ENCODE measurements at regions of chr11 and their contacts with region 1.

Region 1: DNA sequence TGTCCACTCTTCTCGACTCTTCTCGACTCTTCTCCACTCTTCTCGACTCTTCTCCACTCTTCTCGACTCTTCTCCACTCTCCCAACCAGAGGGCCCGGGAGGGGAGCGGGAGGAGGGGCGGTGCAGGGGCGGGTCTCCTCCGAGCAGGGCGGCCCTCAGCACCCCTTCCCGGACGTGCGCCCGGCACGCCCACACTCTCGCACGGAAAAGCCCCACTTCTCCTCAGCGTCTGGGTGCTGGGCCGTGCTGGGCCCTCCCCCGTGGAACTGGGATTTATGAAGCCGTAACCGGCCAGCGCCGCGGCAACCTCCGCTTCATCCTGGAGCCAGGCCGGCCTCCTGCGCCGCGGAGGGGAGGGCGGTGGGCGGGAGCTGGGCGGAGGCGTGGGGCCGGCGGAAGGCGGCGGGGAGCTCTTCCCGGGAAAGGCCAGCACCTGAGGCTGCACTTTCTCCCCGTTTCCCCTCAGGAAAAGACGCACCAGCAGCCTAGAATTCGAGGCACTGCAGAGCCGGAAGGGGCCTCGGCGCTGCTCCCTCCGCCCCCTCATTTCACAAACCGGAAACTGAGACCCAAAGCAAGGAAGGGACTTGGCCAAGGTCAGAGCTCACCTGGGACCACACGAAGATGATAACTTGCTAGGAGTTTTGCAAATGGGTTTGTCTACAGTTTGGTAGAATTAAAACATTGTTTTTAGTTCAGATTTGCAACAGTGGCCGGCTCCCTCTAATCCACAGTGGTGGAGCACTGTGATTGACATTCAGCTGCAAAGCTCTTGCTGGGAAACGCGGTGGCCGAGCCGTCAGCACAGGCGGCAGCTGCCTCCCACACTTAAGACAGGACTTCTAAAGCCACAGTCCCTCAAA is 31.6 kb upstream of the JAM3 start:
- DNase-seq: peak; percentile 27
- ATAC-seq: peak; percentile 74
- H3K4me3 Mint-ChIP-seq: peak overlapping the region; percentile 94
- H3K27ac Mint-ChIP-seq: peak overlapping the region; percentile 82
- H3K4me1 Mint-ChIP-seq: peaks cover 18% of the 10 kb centered on the region
- H3K27me3 Mint-ChIP-seq: peaks cover 10% of the 10 kb centered on the region
- CTCF ChIP-seq: no peak

Region 2: DNA sequence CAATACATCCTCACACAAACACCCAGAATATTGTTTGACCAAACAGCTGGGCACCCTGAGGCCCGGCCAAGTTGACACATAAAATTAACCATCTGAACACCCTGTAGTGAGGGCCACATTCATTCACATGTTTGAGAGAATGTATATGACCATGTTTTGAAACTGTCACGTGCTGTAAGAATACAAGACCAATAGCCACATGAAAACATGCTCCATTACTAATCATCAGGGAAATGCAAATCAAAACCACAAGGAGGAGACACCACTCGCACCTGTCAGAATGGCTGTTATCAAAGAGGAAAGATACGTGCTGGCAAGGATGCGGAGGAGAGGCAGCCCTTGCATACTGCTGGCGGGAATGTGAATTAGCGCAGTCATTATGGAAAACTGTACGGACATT is 42.2 kb before region 1 on chr11:
- CTCF ChIA-PET with region 1: no interaction called
- POLR2A ChIA-PET with region 1: no interaction called
- intact Hi-C with region 1: no loop called
- DNase-seq: no peak
- ATAC-seq: no peak
- H3K4me3 Mint-ChIP-seq: no peak overlapping the region
- H3K27ac Mint-ChIP-seq: no peak overlapping the region
- H3K4me1 Mint-ChIP-seq: peaks cover 6% of the 10 kb centered on the region
- H3K27me3 Mint-ChIP-seq: peaks cover 13% of the 10 kb centered on the region
- CTCF ChIP-seq: no peak

Region 3: DNA sequence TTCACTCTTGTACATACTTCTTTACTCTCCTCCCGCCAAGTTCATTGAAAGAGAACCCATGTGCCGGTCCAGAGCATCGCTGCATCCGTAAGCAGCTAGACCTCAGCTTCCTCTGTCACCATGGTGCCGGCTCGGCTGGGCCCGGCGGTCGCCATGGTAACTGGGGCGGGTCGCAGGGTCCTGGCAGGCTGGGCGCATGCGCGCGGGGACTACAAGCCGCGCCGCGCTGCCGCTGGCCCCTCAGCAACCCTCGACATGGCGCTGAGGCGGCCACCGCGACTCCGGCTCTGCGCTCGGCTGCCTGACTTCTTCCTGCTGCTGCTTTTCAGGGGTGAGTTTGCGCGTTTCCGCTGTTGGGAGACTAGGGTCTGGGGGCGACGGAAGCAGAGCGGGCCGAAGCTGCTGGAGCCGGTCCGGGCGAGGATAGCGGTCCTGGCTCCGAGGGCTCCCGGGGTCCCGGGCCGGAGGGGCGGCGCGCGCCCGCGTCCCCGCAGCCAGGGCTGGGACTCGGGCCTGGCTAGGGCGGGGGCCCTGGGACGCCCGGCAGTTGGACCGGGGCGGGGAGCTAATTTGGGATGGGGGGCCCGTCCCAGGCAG is 31.6 kb after region 1 on chr11 and contains the start of gene JAM3:
- CTCF ChIA-PET with region 1: no interaction called
- POLR2A ChIA-PET with region 1: interaction called, 14 read pairs
- intact Hi-C with region 1: loop called (anchors 1 kb)
- DNase-seq: peak; percentile 99
- ATAC-seq: peak; percentile 88
- H3K4me3 Mint-ChIP-seq: peak within 1 kb of the TSS; percentile 95
- H3K27ac Mint-ChIP-seq: peak within 1 kb of the TSS; percentile 90
- H3K4me1 Mint-ChIP-seq: peaks cover 42% of the 10 kb centered on the region
- H3K27me3 Mint-ChIP-seq: peaks cover 11% of the 10 kb centered on the region
- CTCF ChIP-seq: no peak
- total RNA-seq, gene JAM3: 16.2 and 17.6 TPM in 2 replicates

Region 4: DNA sequence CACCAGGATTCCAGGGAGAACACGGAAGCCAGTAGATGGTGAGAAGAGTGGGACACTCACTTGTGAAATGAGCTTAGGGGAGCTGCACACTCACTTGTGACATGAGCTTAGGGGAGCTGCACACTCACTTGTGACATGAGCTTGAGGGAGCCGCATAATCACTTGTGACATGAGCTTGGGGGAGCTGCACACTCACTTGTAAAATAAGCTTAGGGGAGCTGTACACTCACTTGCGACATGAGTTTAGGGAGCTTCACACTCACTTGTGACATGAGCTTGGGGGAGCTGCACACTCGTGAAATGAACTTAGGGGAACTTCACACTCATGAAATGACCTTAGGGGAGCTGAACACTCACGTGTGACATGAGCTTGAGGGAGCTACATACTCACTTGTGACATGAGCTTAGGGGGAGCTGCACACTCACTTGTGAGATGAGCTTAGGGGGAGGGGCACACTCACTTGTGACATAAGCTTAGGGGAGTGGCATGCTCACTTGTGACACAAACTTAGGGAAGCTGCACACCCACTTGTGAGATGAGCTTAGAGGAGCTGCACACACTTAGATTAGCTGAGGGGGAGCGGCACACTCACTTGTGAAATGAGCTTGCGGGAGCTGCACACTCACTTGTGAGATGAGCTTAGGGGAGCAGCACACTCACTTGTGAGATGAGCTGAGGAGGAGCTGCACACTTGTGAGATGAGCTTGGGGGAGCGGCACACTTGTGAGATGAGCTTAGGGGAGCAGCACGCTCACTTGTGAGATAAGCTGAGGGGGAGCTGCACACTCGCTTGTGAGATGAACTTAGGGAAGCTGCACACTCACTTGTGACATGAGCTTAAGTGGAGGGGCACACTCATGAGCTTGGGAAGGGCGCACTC is 127.5 kb after region 1 on chr11:
- CTCF ChIA-PET with region 1: no interaction called
- POLR2A ChIA-PET with region 1: no interaction called
- intact Hi-C with region 1: no loop called
- DNase-seq: no peak
- ATAC-seq: no peak
- H3K4me3 Mint-ChIP-seq: no peak overlapping the region
- H3K27ac Mint-ChIP-seq: no peak overlapping the region
- H3K4me1 Mint-ChIP-seq: no peaks in the 10 kb centered on the region
- H3K27me3 Mint-ChIP-seq: no peaks in the 10 kb centered on the region
- CTCF ChIP-seq: no peak

Measured in activated B cell treated with CpG ODN at 0.5 μM for 24 hours (primary cell).